ENCODE measurements at regions of chrX and their contacts with region 1.

Region 1: DNA sequence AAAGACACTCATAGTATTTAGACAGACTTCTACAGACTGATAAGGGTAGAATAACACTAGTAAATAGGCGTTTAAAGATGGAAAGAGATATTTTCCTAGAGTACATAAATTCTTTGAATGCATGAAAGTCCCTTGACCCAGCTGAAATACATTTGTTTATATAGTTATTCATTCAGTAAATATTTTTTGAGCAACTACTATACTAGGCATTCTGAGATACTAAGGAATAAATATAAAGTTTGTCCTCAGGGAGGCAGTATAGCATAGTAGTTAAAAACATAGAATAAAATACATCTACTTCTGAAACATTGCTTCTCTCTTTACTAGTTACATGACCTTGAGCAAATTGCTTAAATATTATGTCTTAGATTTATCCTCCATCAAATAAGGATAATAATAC is 27.4 kb downstream of the HMGN5 start:
- DNase-seq: no peak
- ATAC-seq: peak; percentile 39

Region 2: GRCh38 chrX:80648023-80648422 is 526.3 kb before region 1 on chrX:
- intact Hi-C with region 1: no loop called
- DNase-seq: no peak
- ATAC-seq: no peak

Region 3: GRCh38 chrX:81377329-81377728 is 203.0 kb after region 1 on chrX:
- intact Hi-C with region 1: loop called in 1 of 2 experiments (anchors 5 kb)
- DNase-seq: no peak
- ATAC-seq: no peak

Measured in left colon (tissue), 2 donors.